PC-3 (cell line): ENCODE measurements at regions of chr17 and their contacts with region 1.

Region 1: DNA sequence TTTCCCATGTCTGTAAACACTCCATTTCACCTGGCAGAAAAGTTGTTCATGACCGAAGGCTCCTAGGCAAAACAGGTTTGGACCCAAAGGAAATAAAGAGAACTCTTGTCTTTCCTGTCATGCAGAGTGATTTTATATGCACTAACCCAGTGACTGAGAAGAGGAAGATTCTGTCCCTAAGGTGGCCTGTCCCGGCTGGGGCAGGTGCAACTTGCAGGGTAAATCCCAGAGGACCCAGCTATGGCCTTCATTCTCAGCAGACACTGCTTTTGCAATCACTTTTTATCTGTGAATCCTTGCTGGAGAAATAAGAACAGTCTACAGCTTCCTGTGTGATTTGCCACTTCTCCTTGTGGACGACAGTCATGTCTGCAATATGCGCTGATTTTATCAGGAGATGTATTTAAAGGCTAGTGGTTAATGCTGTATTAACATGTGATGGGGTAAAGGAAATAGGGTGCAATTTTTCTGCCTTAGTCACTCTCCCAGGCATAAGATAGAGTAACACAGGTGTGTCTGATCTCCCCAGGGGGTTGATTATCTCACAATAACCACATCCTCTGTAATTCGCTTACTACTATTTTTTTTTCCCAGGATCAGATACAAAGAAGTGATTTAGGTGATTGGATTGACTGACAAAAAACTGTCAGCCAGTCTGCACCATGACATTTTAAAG is 696.8 kb upstream of the SOX9 start:
- DNase-seq: peak; percentile 99
- ATAC-seq: peak; percentile 97
- H3K4me3 ChIP-seq: no peak overlapping the region
- H3K27ac ChIP-seq: peak overlapping the region; percentile 97
- H3K4me1 ChIP-seq: peaks cover 46% of the 10 kb centered on the region
- H3K27me3 ChIP-seq: no peaks in the 10 kb centered on the region
- CTCF ChIP-seq: peak; percentile 38; the same call in 1 of the 2 replicates

Region 2: GRCh38 chr17:71327376-71328059 is 96.5 kb before region 1 on chr17:
- CTCF ChIA-PET with region 1: no interaction called
- POLR2A ChIA-PET with region 1: no interaction called
- intact Hi-C with region 1: loop called (anchors 5 kb)
- DNase-seq: peak; percentile 51
- ATAC-seq: peak; percentile 31; the same call in 1 of the 2 replicates
- H3K4me3 ChIP-seq: no peak overlapping the region
- H3K27ac ChIP-seq: no peak overlapping the region
- H3K4me1 ChIP-seq: peaks cover 25% of the 10 kb centered on the region
- H3K27me3 ChIP-seq: no peaks in the 10 kb centered on the region
- CTCF ChIP-seq: no peak

Region 3: DNA sequence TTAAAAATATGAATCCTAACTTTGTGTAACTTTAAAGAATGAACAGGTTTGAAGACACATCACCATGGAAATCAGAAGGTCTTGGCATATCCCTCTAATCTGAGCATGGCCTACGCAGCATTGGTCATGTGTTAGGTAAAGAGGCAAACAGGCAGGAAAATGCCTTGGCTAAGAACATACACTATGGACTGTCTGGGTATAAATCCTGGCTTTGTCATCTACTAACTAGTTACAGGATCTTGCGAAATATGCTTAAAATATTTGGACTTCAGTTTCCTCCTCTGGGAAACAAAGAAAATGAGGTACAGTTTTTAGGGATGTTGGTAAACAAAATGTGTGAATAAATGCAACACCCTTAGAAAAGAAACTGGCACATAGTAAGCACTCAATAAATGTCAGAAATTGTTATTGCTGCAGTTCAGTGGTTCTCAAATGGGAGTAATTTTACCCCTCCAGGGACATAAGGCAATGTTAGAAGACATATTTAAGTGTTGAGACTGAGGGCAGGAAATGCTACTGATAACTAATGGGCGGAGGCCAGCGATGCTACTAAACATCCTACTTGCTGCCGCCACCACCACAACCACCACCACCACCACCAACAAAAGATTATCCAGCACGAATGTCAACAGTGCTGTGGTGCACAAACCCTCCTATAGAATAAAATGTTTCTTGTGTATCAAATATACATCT is 74.0 kb before region 1 on chr17:
- CTCF ChIA-PET with region 1: no interaction called
- POLR2A ChIA-PET with region 1: no interaction called
- intact Hi-C with region 1: no loop called
- DNase-seq: no peak
- ATAC-seq: no peak
- H3K4me3 ChIP-seq: no peak overlapping the region
- H3K27ac ChIP-seq: no peak overlapping the region
- H3K4me1 ChIP-seq: no peaks in the 10 kb centered on the region
- H3K27me3 ChIP-seq: no peaks in the 10 kb centered on the region
- CTCF ChIP-seq: no peak

Region 4: GRCh38 chr17:71438631-71439146 is 14.7 kb after region 1 on chr17:
- CTCF ChIA-PET with region 1: no interaction called
- POLR2A ChIA-PET with region 1: interaction called, 6 read pairs
- intact Hi-C with region 1: loop called (anchors 1 kb)
- DNase-seq: peak; percentile 97
- ATAC-seq: peak; percentile 76
- H3K4me3 ChIP-seq: no peak overlapping the region
- H3K27ac ChIP-seq: peak overlapping the region; percentile 89
- H3K4me1 ChIP-seq: peaks cover 64% of the 10 kb centered on the region
- H3K27me3 ChIP-seq: no peaks in the 10 kb centered on the region
- CTCF ChIP-seq: peak; percentile 40

Region 5: DNA sequence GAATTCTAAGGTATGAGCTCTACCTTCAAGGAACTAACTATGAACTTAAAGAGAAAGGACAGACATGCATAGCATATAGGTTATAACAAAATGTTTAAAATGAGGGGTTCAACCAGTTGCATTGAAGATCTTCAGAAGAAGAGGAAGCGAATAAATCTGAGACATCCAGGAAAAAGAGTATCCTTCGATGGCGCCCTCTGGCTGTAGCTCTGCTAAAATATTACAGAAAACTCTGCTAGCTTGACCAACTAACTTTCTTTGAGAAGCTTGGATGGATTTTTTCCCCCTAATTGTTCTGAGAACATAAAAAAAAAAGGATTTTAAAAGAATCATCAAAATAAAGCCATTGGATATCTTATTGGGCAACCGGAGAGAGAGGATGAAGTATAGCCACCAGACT is 36.9 kb after region 1 on chr17:
- CTCF ChIA-PET with region 1: interaction called, 10 read pairs
- POLR2A ChIA-PET with region 1: no interaction called
- intact Hi-C with region 1: no loop called
- DNase-seq: peak; percentile 74
- ATAC-seq: no peak
- H3K4me3 ChIP-seq: no peak overlapping the region
- H3K27ac ChIP-seq: no peak overlapping the region
- H3K4me1 ChIP-seq: no peaks in the 10 kb centered on the region
- H3K27me3 ChIP-seq: no peaks in the 10 kb centered on the region
- CTCF ChIP-seq: peak; percentile 89